Ascending aorta (tissue), 2 donors: ENCODE measurements at regions of chr2 and their contacts with region 1.

Region 1: GRCh38 chr2:44361330-44362206 is at the starts of genes CAMKMT and PREPL:
- DNase-seq: peak; percentile 95 to 99
- H3K4me3 ChIP-seq: peak within 1 kb of the TSS; percentile 88 to 98
- H3K27ac ChIP-seq: peak within 1 kb of the TSS; percentile 88 to 99
- H3K4me1 ChIP-seq: peaks cover 4 to 27% of the 10 kb centered on the region in 2 donors
- H3K27me3 ChIP-seq: no peaks in the 10 kb centered on the region
- CTCF ChIP-seq: no peak
- total RNA-seq, gene CAMKMT: 5.1 TPM
- total RNA-seq, gene PREPL: 22.6 TPM

Region 2: DNA sequence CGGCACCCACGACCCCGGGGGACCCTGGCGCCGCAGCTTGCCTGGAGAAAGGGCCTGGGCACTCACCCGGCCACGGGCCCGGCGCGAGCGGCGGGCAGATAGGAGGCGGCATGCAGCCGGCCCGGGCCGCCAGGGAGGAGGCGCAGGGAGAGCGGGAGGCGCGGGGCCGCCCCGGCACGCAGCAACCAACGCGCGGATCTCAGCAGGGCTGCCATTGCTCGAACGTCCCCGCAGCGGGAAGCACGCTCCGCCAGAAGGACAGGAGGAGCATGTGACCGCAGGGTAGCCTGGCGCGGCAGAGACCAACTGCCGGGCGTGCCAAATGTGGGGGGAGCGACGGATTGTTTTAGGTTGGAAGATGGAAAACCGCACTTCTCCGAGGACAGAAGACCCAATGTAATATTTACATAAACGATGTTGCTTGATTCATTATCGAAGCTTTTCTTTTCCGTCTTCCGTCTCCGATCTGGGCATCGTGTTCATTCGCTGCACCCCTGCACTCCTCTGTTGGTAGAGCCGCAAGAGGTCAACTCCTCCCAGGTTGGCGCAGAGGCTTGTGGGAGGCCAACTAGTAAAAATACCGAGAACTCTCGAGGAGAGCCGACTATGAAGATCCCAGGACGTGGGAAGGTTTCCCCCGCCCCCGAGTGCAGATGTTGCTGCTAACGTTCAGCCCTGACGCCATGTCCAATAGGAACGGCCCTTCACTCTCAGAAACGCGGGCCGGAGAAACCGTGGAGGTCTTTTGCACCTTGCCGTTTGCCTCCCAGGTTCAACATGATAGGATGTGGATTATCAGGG is 365.6 kb before region 1 on chr2 and contains the start of gene LRPPRC:
- intact Hi-C with region 1: loop called (anchors 5 kb)
- DNase-seq: peak; percentile 72 to 96
- H3K4me3 ChIP-seq: peak within 1 kb of the TSS; percentile 90 to 99
- H3K27ac ChIP-seq: peak within 1 kb of the TSS; percentile 40 to 80
- H3K4me1 ChIP-seq: peaks cover 8 to 18% of the 10 kb centered on the region in 2 donors
- H3K27me3 ChIP-seq: no peaks in the 10 kb centered on the region
- CTCF ChIP-seq: no peak
- total RNA-seq, gene LRPPRC: 78.1 TPM

Region 3: GRCh38 chr2:44167940-44168680 is 193.5 kb before region 1 on chr2:
- intact Hi-C with region 1: loop called (anchors 1 kb)
- DNase-seq: peak; percentile 99 to 100
- H3K4me3 ChIP-seq: peak overlapping the region; percentile 57 to 76
- H3K27ac ChIP-seq: peak overlapping the region; percentile 95 to 98
- H3K4me1 ChIP-seq: peaks cover 0 to 16% of the 10 kb centered on the region in 2 donors
- H3K27me3 ChIP-seq: no peaks in the 10 kb centered on the region
- CTCF ChIP-seq: no peak

Region 4: DNA sequence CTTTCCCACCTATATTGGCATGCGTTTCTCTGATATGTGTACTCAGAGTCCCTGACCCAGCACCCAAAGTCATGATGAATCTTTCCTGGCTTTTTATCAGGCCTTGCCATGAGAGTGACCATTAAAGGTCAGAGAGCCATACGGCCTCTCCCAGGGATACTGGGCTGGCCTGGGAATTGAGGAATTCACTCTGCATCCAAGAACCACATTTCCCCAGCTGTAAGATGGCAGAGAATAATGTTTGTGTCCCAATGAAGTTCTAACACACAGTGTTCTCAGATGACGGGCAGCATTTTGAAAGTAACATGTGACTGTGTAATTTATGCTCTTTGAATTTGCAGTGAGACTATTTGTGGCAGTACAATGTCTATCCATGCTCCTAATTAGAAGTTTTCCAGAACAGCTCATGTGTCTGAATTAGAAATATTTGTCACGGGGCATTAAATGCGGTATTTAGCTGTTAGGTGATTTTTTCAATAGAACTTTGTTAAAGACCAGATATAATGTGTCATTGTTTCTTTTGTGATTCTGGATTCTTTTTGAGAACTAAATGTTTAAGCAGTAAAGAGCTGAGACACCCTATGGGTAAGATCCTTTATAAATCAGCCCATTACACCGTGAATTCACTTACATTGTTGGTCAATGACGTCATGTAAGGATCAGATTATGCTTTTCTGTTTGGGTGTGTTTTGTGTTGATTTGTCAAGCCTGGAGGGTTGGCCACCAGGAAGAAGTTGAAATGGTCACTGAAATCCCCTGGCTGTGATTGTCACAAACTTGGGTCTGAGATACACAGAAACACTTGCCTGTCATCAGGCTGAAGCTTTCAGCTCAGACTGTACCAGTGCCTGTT is 93.5 kb before region 1 on chr2:
- intact Hi-C with region 1: loop called (anchors 2 kb)
- DNase-seq: peak; percentile 14 to 88
- H3K4me3 ChIP-seq: no peak overlapping the region
- H3K27ac ChIP-seq: peak overlapping the region; percentile 81 to 92
- H3K4me1 ChIP-seq: peaks cover 9 to 42% of the 10 kb centered on the region in 2 donors
- H3K27me3 ChIP-seq: no peaks in the 10 kb centered on the region
- CTCF ChIP-seq: no peak

Region 5: DNA sequence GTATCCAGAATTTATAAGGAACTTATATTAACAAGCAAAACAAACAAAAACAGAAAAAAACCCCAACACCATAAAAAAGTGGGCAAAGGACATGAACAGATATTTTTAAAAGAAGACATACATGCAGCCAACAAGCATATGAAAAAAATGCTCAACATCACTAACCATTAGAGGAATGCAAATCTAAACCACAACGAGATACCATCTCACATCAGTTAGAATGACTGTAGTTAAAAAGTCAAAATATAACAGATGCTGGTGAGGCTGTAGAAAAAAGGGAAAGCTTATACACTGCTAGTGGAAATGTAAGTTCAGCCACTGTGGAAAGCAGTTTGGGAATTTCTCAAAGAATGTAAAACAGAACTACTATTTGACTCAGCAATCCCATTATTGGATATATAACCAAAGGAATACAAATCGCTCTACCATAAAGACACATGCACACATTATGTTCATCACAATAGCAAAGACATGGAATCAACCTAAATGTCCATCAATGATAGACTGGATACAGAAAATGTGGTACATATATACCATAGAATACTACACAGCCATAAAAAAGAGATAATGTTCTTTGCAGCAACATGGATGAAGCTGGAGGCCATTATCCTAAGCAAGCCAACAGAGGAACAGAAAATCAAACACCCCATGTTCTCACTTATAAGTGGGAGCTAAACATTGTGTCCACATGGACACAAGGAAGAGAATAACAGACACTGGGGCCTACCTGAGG is 25.6 kb before region 1 on chr2:
- intact Hi-C with region 1: no loop called
- DNase-seq: no peak
- H3K4me3 ChIP-seq: no peak overlapping the region
- H3K27ac ChIP-seq: no peak overlapping the region
- H3K4me1 ChIP-seq: peaks cover 0 to 4% of the 10 kb centered on the region in 2 donors
- H3K27me3 ChIP-seq: no peaks in the 10 kb centered on the region
- CTCF ChIP-seq: no peak

Region 6: GRCh38 chr2:44351088-44351487 is 10.5 kb before region 1 on chr2:
- intact Hi-C with region 1: loop called (anchors 1 kb)
- DNase-seq: peak in 1 of 2 donors; percentile 74
- H3K4me3 ChIP-seq: no peak overlapping the region
- H3K27ac ChIP-seq: peak overlapping the region; percentile 58 to 59
- H3K4me1 ChIP-seq: peaks cover 3 to 38% of the 10 kb centered on the region in 2 donors
- H3K27me3 ChIP-seq: no peaks in the 10 kb centered on the region
- CTCF ChIP-seq: no peak